Activated CD4-positive, alpha-beta T cell treated with anti-CD3 and anti-CD28 coated beads for 36 hours (primary cell): ENCODE measurements at regions of chr18 and their contacts with region 1.

Region 1: DNA sequence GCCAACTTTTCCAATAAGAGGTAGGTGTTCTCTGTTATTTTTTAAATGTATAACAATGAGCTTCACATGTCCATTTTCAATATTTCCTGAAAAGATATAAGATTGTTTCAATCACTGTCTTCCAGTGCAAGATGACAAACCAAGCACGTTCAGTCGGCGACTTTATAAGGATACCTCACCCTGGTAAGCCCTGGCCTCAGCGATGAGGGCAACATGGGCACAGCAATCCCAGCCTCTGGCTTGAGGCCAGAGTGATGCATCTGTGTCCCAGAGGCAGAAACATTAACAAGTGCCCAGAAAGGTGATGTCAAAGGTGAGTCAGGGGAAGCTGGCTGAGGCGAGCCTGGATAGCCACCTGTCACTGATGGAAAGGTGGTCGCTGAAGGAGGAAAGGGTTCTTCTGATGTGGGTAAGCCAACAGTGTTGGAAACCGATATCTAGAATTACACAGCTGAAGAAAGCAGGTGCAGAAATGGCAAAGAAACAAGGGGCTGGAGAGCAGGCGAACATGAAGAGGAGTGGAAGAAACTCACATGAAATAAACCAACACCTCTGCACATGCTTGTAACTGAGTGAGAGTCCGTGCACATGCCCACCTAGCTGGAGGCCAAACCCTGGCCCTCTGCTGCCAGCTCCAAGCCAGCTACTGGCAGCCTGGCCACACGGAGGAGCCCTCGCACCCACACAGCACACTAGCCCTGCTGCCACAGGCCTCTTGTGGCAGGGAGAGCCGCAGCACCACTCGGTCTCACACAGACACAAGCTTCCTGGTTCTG is 65.5 kb downstream of the FBXO15 start:
- DNase-seq: peak; percentile 84
- ATAC-seq: peak; percentile 95
- H3K4me3 Mint-ChIP-seq: peak overlapping the region; percentile 58
- H3K27ac Mint-ChIP-seq: peak overlapping the region; percentile 96
- H3K4me1 Mint-ChIP-seq: peaks cover 18% of the 10 kb centered on the region
- H3K27me3 Mint-ChIP-seq: no peaks in the 10 kb centered on the region

Region 2: GRCh38 chr18:73669299-73669698 is 412.9 kb before region 1 on chr18:
- CTCF ChIA-PET with region 1: no interaction called
- POLR2A ChIA-PET with region 1: no interaction called
- intact Hi-C with region 1: no loop called
- DNase-seq: no peak
- ATAC-seq: no peak
- H3K4me3 Mint-ChIP-seq: no peak overlapping the region
- H3K27ac Mint-ChIP-seq: no peak overlapping the region
- H3K4me1 Mint-ChIP-seq: no peaks in the 10 kb centered on the region
- H3K27me3 Mint-ChIP-seq: no peaks in the 10 kb centered on the region

Region 3: DNA sequence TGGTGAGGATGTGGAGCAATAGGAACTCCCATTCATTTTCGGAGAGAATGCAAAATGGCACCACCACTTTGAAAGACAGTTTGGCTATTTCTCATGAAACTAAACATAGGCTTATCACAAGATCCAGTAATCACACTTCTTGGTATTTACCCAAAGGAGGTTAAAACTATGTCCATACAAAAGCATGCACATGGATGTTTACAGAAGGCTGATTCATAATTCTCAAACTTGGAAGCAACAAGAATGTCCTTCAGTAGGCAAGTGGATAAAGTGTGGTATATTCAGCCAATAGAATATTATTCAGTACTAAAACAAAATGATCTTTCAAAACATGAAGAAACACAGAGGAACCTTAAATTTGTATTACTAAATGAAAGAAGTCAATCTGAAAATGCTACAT is 375.1 kb before region 1 on chr18:
- CTCF ChIA-PET with region 1: no interaction called
- POLR2A ChIA-PET with region 1: no interaction called
- intact Hi-C with region 1: no loop called
- DNase-seq: no peak
- ATAC-seq: no peak
- H3K4me3 Mint-ChIP-seq: no peak overlapping the region
- H3K27ac Mint-ChIP-seq: no peak overlapping the region
- H3K4me1 Mint-ChIP-seq: no peaks in the 10 kb centered on the region
- H3K27me3 Mint-ChIP-seq: no peaks in the 10 kb centered on the region

Region 4: GRCh38 chr18:74050807-74051206 is 31.3 kb before region 1 on chr18:
- CTCF ChIA-PET with region 1: no interaction called
- POLR2A ChIA-PET with region 1: no interaction called
- intact Hi-C with region 1: no loop called
- DNase-seq: no peak
- ATAC-seq: no peak
- H3K4me3 Mint-ChIP-seq: no peak overlapping the region
- H3K27ac Mint-ChIP-seq: no peak overlapping the region
- H3K4me1 Mint-ChIP-seq: peaks cover 3% of the 10 kb centered on the region
- H3K27me3 Mint-ChIP-seq: no peaks in the 10 kb centered on the region

Region 5: DNA sequence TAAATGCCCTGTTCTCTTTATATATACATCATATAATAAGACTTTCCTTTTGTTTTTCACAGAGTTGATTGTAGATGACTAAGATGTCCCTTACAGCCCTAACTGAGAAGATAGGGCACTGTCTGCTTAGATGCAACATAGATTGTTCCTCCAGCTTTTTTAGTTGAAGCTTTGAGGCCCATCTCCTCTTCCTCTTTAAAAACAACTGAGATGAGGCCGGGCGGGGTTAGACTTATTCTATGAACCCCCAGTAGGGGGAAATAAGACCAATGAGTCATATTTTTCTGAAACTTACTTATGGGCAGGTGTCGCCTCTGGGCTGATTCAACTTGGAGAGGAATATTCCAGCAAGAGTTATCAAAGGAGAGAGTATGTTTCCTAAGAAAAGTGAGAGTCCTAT is 19.1 kb before region 1 on chr18:
- CTCF ChIA-PET with region 1: interaction called, 19 read pairs
- POLR2A ChIA-PET with region 1: interaction called, 4 read pairs
- intact Hi-C with region 1: loop called (anchors 1 to 2 kb)
- DNase-seq: peak; percentile 65
- ATAC-seq: peak; percentile 55
- H3K4me3 Mint-ChIP-seq: no peak overlapping the region
- H3K27ac Mint-ChIP-seq: peak overlapping the region; percentile 75
- H3K4me1 Mint-ChIP-seq: peaks cover 34% of the 10 kb centered on the region
- H3K27me3 Mint-ChIP-seq: no peaks in the 10 kb centered on the region

Region 6: GRCh38 chr18:74116633-74117554 is 34.7 kb after region 1 on chr18:
- CTCF ChIA-PET with region 1: interaction called, 8 read pairs
- POLR2A ChIA-PET with region 1: no interaction called
- intact Hi-C with region 1: loop called (anchors 1 kb)
- DNase-seq: peak; percentile 55
- ATAC-seq: peak; percentile 70
- H3K4me3 Mint-ChIP-seq: no peak overlapping the region
- H3K27ac Mint-ChIP-seq: no peak overlapping the region
- H3K4me1 Mint-ChIP-seq: peaks cover 11% of the 10 kb centered on the region
- H3K27me3 Mint-ChIP-seq: no peaks in the 10 kb centered on the region

Region 7: DNA sequence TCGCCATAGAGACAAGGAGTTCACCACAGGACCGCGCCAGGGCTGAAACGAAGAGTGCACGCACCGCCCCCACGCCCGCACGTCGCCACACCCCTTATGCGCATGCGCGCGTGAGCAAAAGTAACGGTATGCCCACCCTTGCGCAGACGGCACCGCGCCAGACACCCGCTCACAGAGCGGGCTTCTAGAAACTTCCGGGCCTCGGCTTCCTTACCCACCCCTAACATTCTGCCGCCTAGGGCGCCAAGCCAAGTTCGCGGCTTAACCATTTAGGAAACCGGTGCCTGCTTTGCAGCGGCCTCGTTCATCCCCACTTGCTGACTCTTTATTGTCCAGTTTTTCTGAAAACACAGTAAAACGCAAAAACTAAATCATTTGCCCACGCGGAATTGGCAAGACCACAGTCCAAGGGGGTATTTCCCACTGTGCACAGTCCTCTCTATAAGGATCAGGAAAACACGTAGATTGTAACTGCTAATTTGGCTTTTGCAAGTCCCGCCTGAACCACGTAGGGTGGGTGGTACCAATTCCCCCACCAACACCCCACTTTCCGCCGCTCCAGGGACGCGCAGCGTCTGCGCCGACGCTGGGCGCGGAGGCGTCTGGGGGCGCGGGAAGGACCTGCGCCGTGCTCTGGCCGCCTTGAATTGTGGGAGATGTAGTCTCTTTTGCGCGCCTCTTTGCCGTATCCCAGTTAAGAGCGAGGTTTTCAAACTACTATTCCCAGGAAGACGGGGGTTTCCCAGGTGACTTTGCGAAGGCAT is 65.8 kb after region 1 on chr18 and contains the starts of genes FBXO15 and TIMM21:
- CTCF ChIA-PET with region 1: interaction called, 11 read pairs
- POLR2A ChIA-PET with region 1: no interaction called
- intact Hi-C with region 1: loop called (anchors 1 to 2 kb)
- DNase-seq: peak; percentile 98
- ATAC-seq: peak; percentile 91
- H3K4me3 Mint-ChIP-seq: peak within 1 kb of the TSS; percentile 97
- H3K27ac Mint-ChIP-seq: peak within 1 kb of the TSS; percentile 98
- H3K4me1 Mint-ChIP-seq: peaks cover 36% of the 10 kb centered on the region
- H3K27me3 Mint-ChIP-seq: no peaks in the 10 kb centered on the region
- total RNA-seq, gene FBXO15: 1.4 to 1.6 TPM
- total RNA-seq, gene TIMM21: 36.9 to 52.8 TPM